ENCODE measurements at regions of chr7 and their contacts with region 1.

Region 1: GRCh38 chr7:128830231-128831177 is at the start of gene FLNC:
- DNase-seq: peak; percentile 78 to 91
- ATAC-seq: peak; percentile 9 to 26 (median 18)
- H3K4me3 ChIP-seq: peak within 1 kb of the TSS; percentile 89
- H3K27ac ChIP-seq: peak within 1 kb of the TSS; percentile 100
- H3K4me1 ChIP-seq: peaks cover 45% of the 10 kb centered on the region
- H3K27me3 ChIP-seq: no peaks in the 10 kb centered on the region
- CTCF ChIP-seq: no peak
- total RNA-seq, gene FLNC: 2,884 to 6,311 (median 4,401) TPM

Region 2: GRCh38 chr7:128739048-128739962 is 91.2 kb before region 1 on chr7 and contains the start of gene CALU:
- intact Hi-C with region 1: loop called (anchors 5 kb)
- DNase-seq: peak; percentile 97 to 98
- ATAC-seq: peak; percentile 97 to 99 (median 98)
- H3K4me3 ChIP-seq: peak within 1 kb of the TSS; percentile 100
- H3K27ac ChIP-seq: peak within 1 kb of the TSS; percentile 99
- H3K4me1 ChIP-seq: peaks cover 48% of the 10 kb centered on the region
- H3K27me3 ChIP-seq: no peaks in the 10 kb centered on the region
- CTCF ChIP-seq: no peak
- total RNA-seq, gene CALU: 52.0 to 236 (median 80.9) TPM

Region 3: GRCh38 chr7:128755819-128756476 is 74.6 kb before region 1 on chr7:
- intact Hi-C with region 1: loop called in 1 of 2 experiments (anchors 5 kb)
- DNase-seq: no peak
- ATAC-seq: peak; percentile 82 to 92 (median 90)
- H3K4me3 ChIP-seq: peak overlapping the region; percentile 35
- H3K27ac ChIP-seq: peak overlapping the region; percentile 85
- H3K4me1 ChIP-seq: peaks cover 50% of the 10 kb centered on the region
- H3K27me3 ChIP-seq: no peaks in the 10 kb centered on the region
- CTCF ChIP-seq: no peak

Region 4: GRCh38 chr7:128791121-128791961 is 39.2 kb before region 1 on chr7:
- intact Hi-C with region 1: loop called (anchors 5 kb)
- DNase-seq: peak; percentile 81 to 84
- ATAC-seq: peak; percentile 77 to 84 (median 79)
- H3K4me3 ChIP-seq: peak overlapping the region; percentile 87
- H3K27ac ChIP-seq: peak overlapping the region; percentile 30
- H3K4me1 ChIP-seq: peaks cover 20% of the 10 kb centered on the region
- H3K27me3 ChIP-seq: no peaks in the 10 kb centered on the region
- CTCF ChIP-seq: no peak

Region 5: DNA sequence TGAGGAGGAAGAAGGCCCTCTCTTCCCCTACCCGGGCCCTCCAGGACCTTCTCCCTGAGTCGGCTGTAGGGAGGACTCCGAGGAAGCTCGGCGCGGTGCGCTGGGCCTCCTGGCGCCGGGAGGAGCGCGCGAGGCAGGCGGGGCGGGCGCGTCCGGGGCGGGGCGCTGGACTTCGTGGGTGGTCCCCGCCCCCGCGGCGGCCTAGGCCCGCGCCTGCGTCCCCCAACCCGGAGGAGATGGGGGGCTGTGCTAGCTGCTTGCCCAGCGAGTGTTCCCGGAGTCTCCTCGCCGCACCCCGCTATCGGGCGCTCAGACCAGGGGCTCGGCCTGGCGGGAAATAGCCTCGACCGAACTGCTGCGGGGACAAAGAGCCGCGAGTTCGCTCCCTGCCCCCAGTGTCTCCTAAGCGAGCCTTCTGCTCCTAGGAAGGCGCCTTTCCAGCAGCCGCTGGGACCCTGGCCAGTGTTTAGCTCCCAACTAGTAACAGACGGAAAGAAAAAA is 338.7 kb after region 1 on chr7:
- intact Hi-C with region 1: no loop called
- DNase-seq: peak; percentile 45 to 65
- ATAC-seq: peak; percentile 54 to 87 (median 74)
- H3K4me3 ChIP-seq: peak overlapping the region; percentile 62
- H3K27ac ChIP-seq: no peak overlapping the region
- H3K4me1 ChIP-seq: no peaks in the 10 kb centered on the region
- H3K27me3 ChIP-seq: no peaks in the 10 kb centered on the region
- CTCF ChIP-seq: no peak